ENCODE measurements at regions of chr2 and their contacts with region 1.

Region 1: DNA sequence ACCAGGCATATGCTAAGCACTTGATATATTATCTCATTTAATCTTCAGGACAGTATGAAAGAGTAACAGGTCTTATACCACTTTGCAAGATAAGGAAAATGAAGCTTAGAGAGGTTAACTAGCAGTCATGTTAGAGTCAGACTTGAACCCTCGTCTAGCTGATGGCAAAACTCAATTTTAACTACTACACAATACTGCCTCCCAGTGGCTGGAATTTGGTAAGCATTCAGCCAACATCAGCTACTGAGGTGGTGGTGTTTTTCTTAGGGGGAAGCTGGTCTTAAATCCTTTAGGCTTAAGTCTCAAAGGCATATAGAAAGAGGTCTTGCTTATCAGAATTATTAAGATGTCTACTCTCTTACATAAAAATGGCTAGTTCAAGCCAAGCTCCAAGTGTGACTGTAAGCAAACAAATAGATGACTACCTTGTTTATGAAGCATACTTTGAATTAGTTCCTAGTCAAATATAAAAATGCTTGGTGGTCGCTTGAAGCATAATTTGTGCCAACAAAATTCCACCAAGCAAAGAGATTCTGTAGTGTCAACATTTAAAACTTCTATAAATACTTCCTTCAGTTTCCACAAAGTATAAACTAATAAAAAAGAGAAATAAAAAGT is 325.4 kb upstream of the FIGN start:
- DNase-seq: peak; percentile 22
- CTCF ChIP-seq: peak; percentile 68

Region 2: DNA sequence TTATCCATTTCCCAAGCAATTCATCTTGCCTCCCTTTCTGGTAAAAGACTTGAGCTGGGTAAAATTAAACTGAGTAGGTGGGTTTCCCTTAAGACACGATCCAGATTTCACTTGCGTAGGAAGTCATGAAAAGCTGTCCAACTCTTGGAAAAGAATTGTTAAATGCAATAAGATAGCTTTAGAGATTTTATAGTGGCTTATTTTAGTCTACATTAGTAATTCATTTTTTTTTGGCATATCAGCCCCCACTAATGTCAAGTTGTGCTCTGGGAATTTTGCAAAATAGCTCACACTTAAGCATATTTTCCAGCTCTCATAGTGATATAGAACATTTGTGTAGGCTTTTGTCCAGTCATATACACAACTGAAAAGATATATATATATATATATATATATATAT is 19.2 kb after region 1 on chr2:
- CTCF ChIA-PET with region 1: interaction called, 20 read pairs
- POLR2A ChIA-PET with region 1: no interaction called
- DNase-seq: no peak
- CTCF ChIP-seq: no peak